BJ (cell line): ENCODE measurements at regions of chr6 and their contacts with region 1.

Region 1: DNA sequence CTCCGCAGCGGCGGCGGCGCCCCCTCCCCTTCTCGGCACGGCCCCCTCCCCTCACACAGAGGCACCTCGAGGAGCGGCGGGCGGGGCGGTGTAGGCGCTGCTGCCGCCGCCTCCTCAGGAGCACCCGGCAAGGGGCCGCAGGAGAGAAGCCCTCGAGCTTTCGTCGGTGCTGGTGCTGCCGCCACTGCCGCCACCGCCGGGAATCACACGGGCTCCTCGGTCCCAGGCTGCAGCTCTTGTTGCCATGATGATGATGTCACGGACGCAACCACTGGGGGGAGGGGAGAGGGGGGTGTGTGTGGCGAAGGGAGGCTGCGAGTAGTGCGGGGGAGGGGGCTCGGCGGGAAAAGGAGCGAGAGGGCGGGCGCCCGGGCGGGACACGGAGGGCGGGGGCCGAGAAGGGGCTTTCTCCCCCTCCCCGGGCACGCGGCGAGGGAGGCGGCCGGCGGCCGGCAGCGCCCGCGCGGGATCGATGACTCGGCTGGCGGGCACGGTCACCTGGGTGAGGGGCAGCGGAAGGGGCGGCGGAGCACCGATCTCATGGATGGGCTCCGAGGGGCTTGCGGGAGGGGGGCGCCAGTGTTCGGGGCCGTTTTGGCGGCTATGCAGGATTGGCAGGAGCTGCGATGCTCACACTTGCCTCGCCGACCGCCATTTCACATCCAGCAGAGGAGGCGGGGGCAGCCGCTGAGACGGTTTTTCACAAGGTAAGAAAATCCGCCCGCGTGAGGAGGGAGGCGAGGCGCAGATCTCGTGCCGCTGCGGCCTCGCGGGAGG is at the start of gene REV3L:
- DNase-seq: no peak
- H3K4me3 ChIP-seq: peak within 1 kb of the TSS; percentile 72
- H3K27me3 ChIP-seq: no peaks in the 10 kb centered on the region
- CTCF ChIP-seq: no peak
- polyA plus RNA-seq, gene REV3L: 19.1 and 33.1 TPM in 2 replicates

Region 2: DNA sequence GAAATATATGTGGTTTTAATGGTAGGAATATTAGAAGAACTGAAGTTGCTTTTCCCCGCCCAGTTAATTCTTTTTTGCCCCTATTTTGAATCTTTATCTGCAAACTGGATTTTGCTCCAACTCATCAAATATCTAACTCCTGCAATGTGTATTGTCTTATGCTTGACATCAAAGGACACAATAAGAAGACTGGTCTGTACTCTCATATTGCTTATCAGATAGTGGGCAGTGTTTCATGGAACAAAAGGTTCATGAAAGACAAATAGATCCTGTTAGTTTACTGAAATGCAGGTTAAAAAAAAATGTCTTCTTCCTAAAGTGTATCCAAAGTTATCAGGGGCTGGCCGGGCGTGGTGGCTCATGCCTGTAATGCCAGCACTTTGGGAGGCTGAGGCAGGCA is 552.4 kb before region 1 on chr6:
- CTCF ChIA-PET with region 1: no interaction called
- POLR2A ChIA-PET with region 1: no interaction called
- DNase-seq: no peak
- H3K4me3 ChIP-seq: no peak overlapping the region
- H3K27me3 ChIP-seq: no peaks in the 10 kb centered on the region
- CTCF ChIP-seq: no peak

Region 3: DNA sequence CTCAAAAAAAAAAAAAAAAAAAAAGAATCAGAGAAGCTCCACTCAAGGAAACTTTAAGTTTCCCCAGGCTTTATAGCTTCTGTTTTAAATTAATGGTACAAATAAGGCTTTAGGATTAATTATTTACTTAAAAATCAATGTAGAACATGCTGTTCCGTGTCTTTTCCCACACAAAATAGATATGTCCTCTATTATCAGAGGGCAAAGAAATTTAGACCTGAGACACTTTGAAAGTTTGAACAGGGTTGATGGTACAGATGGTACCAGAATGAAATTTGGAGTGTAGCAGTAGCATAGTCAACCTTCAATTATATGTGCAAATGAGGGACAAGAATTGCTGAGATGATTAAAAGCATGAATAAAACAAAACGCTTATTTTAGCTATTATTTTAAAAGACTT is 32.1 kb after region 1 on chr6:
- CTCF ChIA-PET with region 1: no interaction called
- POLR2A ChIA-PET with region 1: no interaction called
- DNase-seq: no peak
- H3K4me3 ChIP-seq: no peak overlapping the region
- H3K27me3 ChIP-seq: no peaks in the 10 kb centered on the region
- CTCF ChIP-seq: no peak

Region 4: GRCh38 chr6:111555036-111555435 is 71.9 kb after region 1 on chr6:
- CTCF ChIA-PET with region 1: interaction called, 3 read pairs
- POLR2A ChIA-PET with region 1: interaction called, 18 read pairs
- DNase-seq: peak; percentile 73
- H3K4me3 ChIP-seq: no peak overlapping the region
- H3K27me3 ChIP-seq: no peaks in the 10 kb centered on the region
- CTCF ChIP-seq: no peak